ENCODE measurements at regions of chr7 and their contacts with region 1.

Region 1: GRCh38 chr7:85851571-85852193 is 664.8 kb upstream of the SEMA3D start:
- DNase-seq: peak; percentile 31
- H3K4me3 ChIP-seq: no peak overlapping the region; a peak in 1 of 4 replicates
- H3K27ac ChIP-seq: no peak overlapping the region
- H3K4me1 ChIP-seq: no peaks in the 10 kb centered on the region
- H3K27me3 ChIP-seq: no peaks in the 10 kb centered on the region
- CTCF ChIP-seq: peak; percentile 85
- EP300 ChIP-seq: no peak
- RAD21 ChIP-seq: peak; percentile 82

Region 2: GRCh38 chr7:85030893-85031292 is 820.8 kb before region 1 on chr7:
- CTCF ChIA-PET with region 1: interaction called, 19 read pairs
- POLR2A ChIA-PET with region 1: no interaction called
- DNase-seq: peak; percentile 1
- H3K4me3 ChIP-seq: no peak overlapping the region
- H3K27ac ChIP-seq: no peak overlapping the region
- H3K4me1 ChIP-seq: peaks cover 0 to 5% of the 10 kb centered on the region in 2 experiments; a peak in 2 of 4 replicates
- H3K27me3 ChIP-seq: no peaks in the 10 kb centered on the region
- CTCF ChIP-seq: peak; percentile 95
- EP300 ChIP-seq: no peak
- RAD21 ChIP-seq: peak; percentile 78

Region 3: GRCh38 chr7:85620936-85621685 is 230.6 kb before region 1 on chr7:
- CTCF ChIA-PET with region 1: no interaction called
- POLR2A ChIA-PET with region 1: no interaction called
- DNase-seq: no peak
- H3K4me3 ChIP-seq: no peak overlapping the region
- H3K27ac ChIP-seq: no peak overlapping the region
- H3K4me1 ChIP-seq: no peaks in the 10 kb centered on the region
- H3K27me3 ChIP-seq: no peaks in the 10 kb centered on the region
- CTCF ChIP-seq: no peak
- EP300 ChIP-seq: no peak
- RAD21 ChIP-seq: no peak

Region 4: DNA sequence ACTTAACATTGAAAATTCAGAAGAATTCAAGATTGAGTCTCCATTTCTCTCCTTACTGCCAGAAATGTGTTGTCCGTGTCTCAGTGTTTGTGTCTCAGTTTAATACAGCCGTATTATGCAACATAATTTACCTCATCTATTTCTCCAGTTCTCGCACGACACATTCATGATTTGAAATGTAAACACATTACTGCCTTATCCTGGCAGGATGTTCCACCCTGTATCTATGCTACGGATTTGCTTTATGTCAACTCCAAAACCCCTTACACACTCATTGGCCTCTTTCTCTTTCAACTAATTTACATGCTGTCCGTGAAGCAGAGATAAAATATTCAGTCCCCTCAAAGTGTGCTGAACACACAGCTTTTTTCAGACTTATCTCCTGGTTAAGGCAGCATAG is 11.1 kb before region 1 on chr7:
- CTCF ChIA-PET with region 1: interaction called, 14 read pairs
- POLR2A ChIA-PET with region 1: no interaction called
- DNase-seq: no peak
- H3K4me3 ChIP-seq: no peak overlapping the region
- H3K27ac ChIP-seq: no peak overlapping the region
- H3K4me1 ChIP-seq: no peaks in the 10 kb centered on the region
- H3K27me3 ChIP-seq: no peaks in the 10 kb centered on the region
- CTCF ChIP-seq: no peak
- EP300 ChIP-seq: no peak
- RAD21 ChIP-seq: no peak